Gastrocnemius medialis (tissue), 4 donors: ENCODE measurements at regions of chr6 and their contacts with region 1.

Region 1: GRCh38 chr6:87799651-87800050 is 97.6 kb upstream of the AKIRIN2 start:
- DNase-seq: no peak
- ATAC-seq: no peak
- H3K4me3 ChIP-seq: no peak overlapping the region
- H3K27ac ChIP-seq: no peak overlapping the region
- H3K4me1 ChIP-seq: no peaks in the 10 kb centered on the region
- H3K27me3 ChIP-seq: no peaks in the 10 kb centered on the region
- CTCF ChIP-seq: no peak
- POLR2A ChIP-seq: no peak

Region 2: GRCh38 chr6:87636315-87636714 is 163.3 kb before region 1 on chr6:
- in situ Hi-C with region 1: no loop called
- intact Hi-C with region 1: loop called (anchors 10 kb)
- DNase-seq: no peak
- ATAC-seq: no peak
- H3K4me3 ChIP-seq: no peak overlapping the region
- H3K27ac ChIP-seq: no peak overlapping the region
- H3K4me1 ChIP-seq: peaks cover 0 to 6% of the 10 kb centered on the region in 2 donors
- H3K27me3 ChIP-seq: no peaks in the 10 kb centered on the region
- CTCF ChIP-seq: no peak
- POLR2A ChIP-seq: no peak

Region 3: GRCh38 chr6:87660226-87660911 is 139.3 kb before region 1 on chr6:
- in situ Hi-C with region 1: no loop called
- intact Hi-C with region 1: loop called (anchors 10 kb)
- DNase-seq: peak; percentile 32 to 65
- ATAC-seq: peak; percentile 86
- H3K4me3 ChIP-seq: no peak overlapping the region
- H3K27ac ChIP-seq: peak overlapping the region; percentile 69 to 79 (median 72)
- H3K4me1 ChIP-seq: peaks cover 28 to 48% of the 10 kb centered on the region in 2 donors
- H3K27me3 ChIP-seq: no peaks in the 10 kb centered on the region
- CTCF ChIP-seq: no peak
- POLR2A ChIP-seq: no peak